ENCODE measurements at regions of chr17 and their contacts with region 1.

Region 1: GRCh38 chr17:32386844-32387243 is 36.9 kb downstream of the ZNF207 start:
- DNase-seq: no peak
- H3K4me3 ChIP-seq: no peak overlapping the region
- H3K27ac ChIP-seq: no peak overlapping the region
- H3K4me1 ChIP-seq: no peaks in the 10 kb centered on the region
- H3K27me3 ChIP-seq: no peaks in the 10 kb centered on the region
- CTCF ChIP-seq: no peak
- EP300 ChIP-seq: no peak
- POLR2A ChIP-seq: no peak
- RAD21 ChIP-seq: no peak

Region 2: DNA sequence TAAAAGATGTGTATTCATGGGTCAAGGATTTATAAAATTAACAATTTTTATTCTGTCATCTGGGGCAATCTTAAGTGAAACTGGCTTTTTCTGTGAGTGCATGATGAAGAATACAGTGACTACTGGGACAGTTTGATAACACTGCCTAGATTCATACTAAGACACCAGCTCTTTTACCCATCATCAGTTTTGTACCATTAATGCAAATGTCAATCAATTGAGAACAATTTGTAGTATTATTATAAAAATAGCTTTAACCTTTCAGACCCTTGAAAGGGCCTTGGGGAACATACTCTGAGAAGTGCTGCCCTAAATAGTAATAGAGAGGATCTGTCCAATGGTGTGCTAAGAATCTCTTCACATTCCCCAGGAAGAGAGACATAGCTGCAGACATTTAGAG is 12.1 kb after region 1 on chr17:
- CTCF ChIA-PET with region 1: interaction called, 3 read pairs
- POLR2A ChIA-PET with region 1: interaction called, 12 read pairs
- DNase-seq: no peak
- H3K4me3 ChIP-seq: no peak overlapping the region
- H3K27ac ChIP-seq: no peak overlapping the region
- H3K4me1 ChIP-seq: no peaks in the 10 kb centered on the region
- H3K27me3 ChIP-seq: no peaks in the 10 kb centered on the region
- CTCF ChIP-seq: no peak
- EP300 ChIP-seq: no peak
- POLR2A ChIP-seq: no peak
- RAD21 ChIP-seq: no peak